Left colon (tissue), 2 donors: ENCODE measurements at regions of chr4 and their contacts with region 1.

Region 1: DNA sequence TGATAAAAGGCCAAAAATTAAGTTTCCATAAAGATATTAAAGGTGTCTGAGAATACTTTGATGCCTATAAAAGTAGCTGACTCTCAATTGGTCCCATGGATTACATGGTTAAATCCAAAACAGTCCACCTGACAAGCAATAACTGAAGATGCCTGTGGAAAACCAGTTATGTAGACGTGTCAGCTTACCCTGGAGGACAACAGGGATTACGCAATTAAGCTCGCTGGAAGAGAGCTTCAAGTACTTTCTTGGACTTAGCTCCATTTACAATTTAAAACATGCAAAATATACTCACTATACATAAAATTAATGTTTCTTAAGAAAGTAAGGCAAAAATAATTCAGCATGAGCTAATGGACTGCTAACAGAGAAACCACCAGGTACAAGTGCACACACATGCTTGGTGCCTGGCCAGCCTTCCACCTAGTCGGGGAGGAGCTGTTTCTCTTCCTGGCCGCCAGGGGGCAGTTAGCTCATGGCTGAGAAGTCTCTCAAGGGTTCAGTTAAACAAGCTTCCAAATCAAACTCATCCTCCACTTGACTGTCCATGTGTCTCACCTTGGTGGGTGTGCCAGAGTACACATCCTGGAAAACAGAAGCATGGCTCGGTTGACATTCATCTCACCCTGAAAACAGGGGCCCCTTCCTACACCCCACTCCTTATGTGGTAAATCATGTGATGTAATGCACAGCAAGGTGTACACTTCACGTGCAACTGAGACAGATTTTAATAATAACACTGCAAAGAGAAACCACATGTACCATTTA is 9.2 kb upstream of the FAM53A start:
- DNase-seq: peak; percentile 57 to 63
- ATAC-seq: peak; percentile 94

Region 2: DNA sequence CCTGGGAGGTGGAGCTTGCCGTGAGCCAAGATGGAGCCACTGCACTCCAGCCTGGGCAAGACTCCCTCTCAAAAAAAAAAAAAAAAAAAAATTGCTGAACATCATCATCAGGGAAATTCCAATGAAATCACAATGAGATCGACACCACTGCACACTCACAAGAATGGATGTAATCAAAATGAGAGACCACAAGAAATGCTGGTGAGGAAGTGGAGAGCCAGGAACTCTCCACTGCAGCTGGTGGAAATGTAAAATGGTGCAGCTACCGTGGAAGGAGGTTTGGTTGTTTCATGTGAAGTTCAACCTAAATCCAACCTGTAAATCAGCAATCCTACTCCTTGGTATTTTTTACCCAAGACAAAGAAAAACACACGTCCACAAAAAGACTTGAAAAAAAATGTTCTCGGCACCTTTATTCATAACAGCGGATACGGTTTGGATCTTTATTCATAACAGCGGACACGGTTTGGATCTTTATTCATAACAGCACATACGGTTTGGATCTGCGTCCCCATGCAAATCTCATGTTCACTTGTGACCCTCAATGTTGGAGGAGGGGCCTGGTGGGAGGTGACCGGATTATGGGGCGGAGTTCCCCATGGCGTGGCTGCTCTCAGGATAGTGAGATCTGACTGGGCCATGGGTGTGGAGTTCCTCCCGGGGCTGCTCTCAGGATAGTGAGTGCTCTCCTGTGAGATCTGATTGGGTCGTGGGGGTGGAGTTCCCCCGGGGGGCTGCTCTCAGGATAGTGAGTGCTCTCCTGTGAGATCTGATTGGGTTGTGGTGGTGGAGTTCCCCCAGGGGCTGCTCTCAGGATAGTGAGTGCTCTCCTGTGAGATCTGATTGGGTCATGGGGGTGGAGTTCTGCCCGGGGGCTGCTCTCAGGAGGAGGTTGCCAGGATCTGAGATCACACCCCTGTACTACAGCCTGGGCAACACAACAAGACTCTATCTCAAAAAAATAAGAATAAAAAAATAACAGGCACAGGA is 768.9 kb before region 1 on chr4:
- intact Hi-C with region 1: no loop called
- DNase-seq: no peak
- ATAC-seq: peak; percentile 36

Region 3: GRCh38 chr4:1726146-1726934 is 33.0 kb after region 1 on chr4:
- intact Hi-C with region 1: loop called in 1 of 2 experiments (anchors 5 kb)
- DNase-seq: peak; percentile 83 to 94
- ATAC-seq: peak; percentile 69

Region 4: GRCh38 chr4:2041234-2042130 is 348.2 kb after region 1 on chr4:
- intact Hi-C with region 1: no loop called
- DNase-seq: peak; percentile 77 to 87
- ATAC-seq: peak; percentile 68